HCT116 (cell line): ENCODE measurements at regions of chr19 and their contacts with region 1.

Region 1: DNA sequence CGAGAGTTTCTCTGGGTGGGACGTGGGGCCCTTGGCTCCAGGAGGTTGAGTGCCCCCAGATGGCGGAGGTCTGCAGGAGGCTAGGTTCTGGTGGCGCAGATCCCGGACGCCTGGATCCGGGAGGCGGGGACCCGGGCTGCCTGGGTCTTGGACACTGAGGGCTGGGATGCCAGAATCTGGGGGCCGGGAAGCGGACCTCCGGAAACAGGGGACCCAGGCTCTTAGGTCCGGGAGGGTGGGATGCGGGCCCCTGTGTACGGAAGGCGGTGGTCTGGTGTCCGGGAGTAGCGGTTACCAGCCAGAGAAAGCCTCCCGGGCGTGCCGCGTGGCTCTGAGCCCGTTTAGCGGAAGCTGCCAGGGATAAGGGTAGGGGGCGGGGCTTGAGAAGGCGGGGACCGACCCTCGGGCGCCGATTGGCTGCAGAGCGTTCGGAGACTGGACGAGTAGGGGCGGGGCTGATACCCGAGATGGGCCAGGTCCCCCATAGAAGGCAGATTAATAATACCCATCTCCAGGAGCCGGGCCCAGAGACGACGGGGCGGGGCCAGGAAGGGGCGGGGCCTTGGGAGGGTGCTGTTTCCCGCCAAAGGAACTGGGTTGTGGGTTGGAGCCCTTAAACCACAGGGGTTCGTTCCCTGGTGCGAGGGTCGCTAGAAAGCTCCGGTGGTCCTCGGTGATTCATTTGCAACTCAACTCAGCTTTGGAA is at the start of gene SLC1A5:
- DNase-seq: peak; percentile 94
- ATAC-seq: peak; percentile 83
- H3K4me3 ChIP-seq: peak within 1 kb of the TSS; percentile 93 to 96
- H3K27ac ChIP-seq: peak within 1 kb of the TSS; percentile 91
- H3K4me1 ChIP-seq: peaks cover 40 to 57% of the 10 kb centered on the region in 2 experiments
- H3K27me3 ChIP-seq: no peaks in the 10 kb centered on the region
- CTCF ChIP-seq: no peak
- POLR2A ChIP-seq: peak; percentile 99
- RAD21 ChIP-seq: no peak
- total RNA-seq, gene SLC1A5: 284 TPM

Region 2: DNA sequence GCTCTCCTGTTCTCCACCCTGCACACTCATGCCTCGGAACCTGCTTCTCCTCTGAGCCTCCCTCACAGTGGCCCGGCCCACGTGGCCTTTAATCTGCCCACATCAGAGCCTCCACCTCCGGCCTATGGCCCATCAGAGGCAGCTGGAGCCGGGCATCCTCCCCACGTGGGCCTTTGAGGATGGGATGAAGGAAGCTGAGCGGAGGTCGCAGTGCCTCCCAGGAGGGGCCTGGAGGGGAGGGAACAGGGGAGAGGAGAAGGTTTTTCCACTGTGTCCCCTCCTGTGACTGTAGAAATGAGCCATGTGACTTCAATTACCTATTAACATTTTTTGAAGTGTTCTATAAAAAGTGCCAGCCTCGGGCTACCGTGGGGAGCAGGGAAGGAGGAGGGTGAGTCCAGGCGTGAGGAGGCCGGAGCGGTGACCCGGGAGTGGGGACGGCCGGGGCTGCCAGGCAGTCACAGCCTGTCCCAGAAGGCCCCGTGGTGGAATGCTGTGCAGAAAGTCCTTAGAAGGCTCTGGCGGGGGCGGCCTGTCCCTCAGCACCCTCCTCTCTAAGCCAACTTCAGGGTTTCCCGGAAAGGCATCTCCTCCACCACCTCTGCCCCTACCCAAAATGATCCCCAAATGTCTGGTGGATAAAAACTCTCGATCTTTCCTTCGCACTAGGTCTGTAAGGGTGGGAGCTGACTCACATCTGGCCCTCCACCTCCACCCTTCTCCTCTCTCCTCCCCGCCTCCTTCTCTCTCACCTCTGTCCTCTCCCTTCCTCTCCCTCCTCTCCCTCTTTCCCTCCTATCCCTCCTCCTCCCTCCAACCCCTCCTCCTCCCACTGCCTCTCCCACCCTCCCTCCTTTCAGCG is 24.8 kb after region 1 on chr19:
- CTCF ChIA-PET with region 1: no interaction called
- POLR2A ChIA-PET with region 1: interaction called, 25 read pairs
- RAD21 ChIA-PET with region 1: interaction called in 1 of 2 experiments, 3 read pairs
- intact Hi-C with region 1: no loop called
- DNase-seq: no peak
- ATAC-seq: peak; percentile 78
- H3K4me3 ChIP-seq: no peak overlapping the region
- H3K27ac ChIP-seq: peak overlapping the region; percentile 22; the same call in 1 of the 2 replicates
- H3K4me1 ChIP-seq: peaks cover 32 to 58% of the 10 kb centered on the region in 2 experiments
- H3K27me3 ChIP-seq: no peaks in the 10 kb centered on the region
- CTCF ChIP-seq: no peak
- POLR2A ChIP-seq: no peak
- RAD21 ChIP-seq: no peak

Region 3: DNA sequence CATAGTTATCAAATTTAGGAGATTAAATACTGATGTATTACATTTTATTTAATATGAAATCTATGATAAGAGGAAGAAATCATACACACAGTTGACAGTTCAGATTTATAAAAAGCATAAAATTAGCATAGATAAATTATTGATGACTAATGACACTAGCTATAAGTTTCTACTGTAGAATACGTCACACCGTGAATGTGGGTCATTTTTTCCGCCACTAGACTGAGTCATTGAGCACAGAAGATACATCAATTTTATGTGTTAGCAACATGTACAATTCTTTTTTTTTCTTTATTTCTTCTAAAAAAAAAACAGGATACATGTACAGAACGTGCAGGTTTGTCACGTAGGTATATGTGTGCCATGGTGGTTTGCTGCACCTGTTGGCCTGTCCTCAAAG is 40.1 kb after region 1 on chr19:
- CTCF ChIA-PET with region 1: interaction called, 3 read pairs
- POLR2A ChIA-PET with region 1: interaction called, 26 read pairs
- RAD21 ChIA-PET with region 1: interaction called, 4 to 5 read pairs
- intact Hi-C with region 1: loop called (anchors 5 kb)
- DNase-seq: no peak
- ATAC-seq: no peak
- H3K4me3 ChIP-seq: no peak overlapping the region
- H3K27ac ChIP-seq: no peak overlapping the region
- H3K4me1 ChIP-seq: peaks cover 27 to 36% of the 10 kb centered on the region in 2 experiments
- H3K27me3 ChIP-seq: no peaks in the 10 kb centered on the region
- CTCF ChIP-seq: no peak
- POLR2A ChIP-seq: no peak
- RAD21 ChIP-seq: no peak

Region 4: DNA sequence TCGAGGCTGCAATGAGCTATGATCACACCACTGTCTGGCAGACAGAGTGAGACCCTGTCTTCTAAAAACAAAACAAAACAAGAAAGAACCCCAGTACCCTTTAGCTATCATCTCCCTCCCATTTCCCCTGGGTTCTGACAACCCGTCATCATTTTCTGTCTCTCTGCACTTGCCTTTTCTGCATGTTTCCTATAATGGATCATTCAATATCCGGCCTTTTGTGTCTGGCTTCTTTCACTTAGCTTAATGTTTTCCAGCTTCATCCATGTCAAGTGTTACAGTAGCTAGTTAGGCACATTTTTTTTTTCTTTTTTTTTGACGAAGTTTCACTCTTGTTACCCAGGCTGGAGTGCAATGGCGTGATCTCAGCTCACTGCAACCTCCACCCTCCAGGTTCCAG is 45.7 kb after region 1 on chr19:
- CTCF ChIA-PET with region 1: interaction called, 3 read pairs
- POLR2A ChIA-PET with region 1: interaction called, 26 read pairs
- RAD21 ChIA-PET with region 1: interaction called, 4 to 5 read pairs
- intact Hi-C with region 1: loop called (anchors 5 kb)
- DNase-seq: no peak
- ATAC-seq: no peak
- H3K4me3 ChIP-seq: no peak overlapping the region
- H3K27ac ChIP-seq: no peak overlapping the region
- H3K4me1 ChIP-seq: peaks cover 8 to 23% of the 10 kb centered on the region in 2 experiments
- H3K27me3 ChIP-seq: no peaks in the 10 kb centered on the region
- CTCF ChIP-seq: no peak
- POLR2A ChIP-seq: no peak
- RAD21 ChIP-seq: no peak

Region 5: DNA sequence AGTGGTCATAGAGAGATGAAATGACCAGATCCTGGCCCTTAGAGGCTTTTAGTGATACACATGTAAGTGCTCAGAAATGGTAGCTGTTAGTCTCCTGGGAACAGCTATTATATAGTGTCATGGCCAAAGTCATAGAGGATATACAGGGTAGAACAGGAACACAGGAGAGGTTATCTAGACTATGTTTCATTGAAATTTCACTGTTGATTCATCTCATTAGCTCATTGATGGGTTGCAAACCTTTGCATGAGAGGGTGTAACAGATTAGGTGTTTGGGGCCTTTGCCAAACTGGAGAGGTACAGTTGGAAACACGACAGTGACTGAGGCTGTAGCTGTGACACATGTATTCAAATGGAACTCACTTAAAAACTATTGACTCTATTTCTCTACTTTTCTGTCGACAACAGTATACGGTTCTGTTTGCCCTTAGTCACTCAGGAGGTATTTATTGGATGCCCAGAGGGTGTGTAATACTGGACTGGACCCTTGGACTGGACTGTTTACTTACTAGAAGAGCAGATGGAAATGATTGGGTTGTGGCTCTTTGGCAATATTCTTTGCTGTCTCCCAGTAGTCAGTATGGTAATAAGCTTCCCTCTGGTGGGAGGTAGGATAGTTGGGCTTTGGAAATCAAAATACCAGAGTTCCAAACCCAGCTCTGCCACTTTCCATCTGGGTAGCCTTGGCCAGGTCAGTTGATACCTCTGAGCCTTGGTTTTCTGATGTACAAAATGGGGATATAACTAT is 102.2 kb after region 1 on chr19:
- CTCF ChIA-PET with region 1: no interaction called
- POLR2A ChIA-PET with region 1: no interaction called
- RAD21 ChIA-PET with region 1: no interaction called
- intact Hi-C with region 1: no loop called
- DNase-seq: no peak
- ATAC-seq: peak; percentile 87
- H3K4me3 ChIP-seq: peak overlapping the region in 1 of 2 experiments; percentile 9; a peak in 1 of 4 replicates
- H3K27ac ChIP-seq: peak overlapping the region; percentile 14; the same call in 1 of the 2 replicates
- H3K4me1 ChIP-seq: peaks cover 23 to 34% of the 10 kb centered on the region in 2 experiments
- H3K27me3 ChIP-seq: no peaks in the 10 kb centered on the region
- CTCF ChIP-seq: no peak
- POLR2A ChIP-seq: no peak
- RAD21 ChIP-seq: no peak